ENCODE measurements at regions of chr9 and their contacts with region 1.

Region 1: DNA sequence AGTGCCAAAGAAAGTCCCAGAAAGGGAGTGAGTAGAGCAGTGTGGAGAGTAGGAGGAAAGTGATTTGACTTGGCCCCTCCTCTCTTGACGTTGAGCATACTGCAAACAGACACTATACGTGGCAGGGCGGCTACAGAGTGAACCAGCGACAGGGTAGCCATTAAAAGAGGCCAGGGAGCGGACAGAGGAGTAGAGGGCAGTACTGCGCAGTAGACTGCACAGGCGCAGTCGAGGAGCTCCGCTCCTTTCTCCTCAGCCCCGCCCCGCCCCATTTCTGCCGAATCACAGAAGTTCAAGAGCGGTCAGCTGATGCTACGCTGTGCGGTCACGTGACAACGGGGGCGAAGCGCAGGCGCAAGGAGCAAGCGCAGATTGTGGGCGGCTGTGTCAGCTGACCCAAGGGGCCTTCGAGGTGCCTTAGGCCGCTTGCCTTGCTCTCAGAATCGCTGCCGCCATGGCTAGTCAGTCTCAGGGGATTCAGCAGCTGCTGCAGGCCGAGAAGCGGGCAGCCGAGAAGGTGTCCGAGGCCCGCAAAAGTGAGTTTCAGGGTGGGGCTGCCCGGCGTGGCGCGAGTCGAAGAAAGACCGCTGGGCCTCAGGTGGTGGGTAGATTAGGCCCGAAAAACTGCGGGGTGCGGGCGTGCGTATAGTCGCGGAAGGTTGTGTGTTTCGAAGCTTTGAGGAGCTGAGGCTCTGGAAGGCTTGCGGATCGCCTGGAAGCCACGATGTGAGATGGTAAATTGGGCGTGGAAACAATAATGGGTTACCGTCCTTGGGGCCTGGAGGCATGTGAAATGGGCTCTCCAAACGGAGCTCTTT is at the start of gene ATP6V1G1:
- DNase-seq: peak; percentile 93 to 99 (median 97)
- ATAC-seq: peak; percentile 97
- H3K4me3 ChIP-seq: peak within 1 kb of the TSS; percentile 94
- H3K4me3 Mint-ChIP-seq: peak within 1 kb of the TSS; percentile 95 to 99 (median 98)
- H3K27ac ChIP-seq: peak within 1 kb of the TSS; percentile 99
- H3K27ac Mint-ChIP-seq: peak within 1 kb of the TSS; percentile 91 to 100 (median 99)
- H3K4me1 ChIP-seq: peaks cover 33 to 35% of the 10 kb centered on the region in 2 donors
- H3K4me1 Mint-ChIP-seq: peaks cover 43 to 53% (median 49%) of the 10 kb centered on the region in 7 donors
- H3K27me3 ChIP-seq: no peaks in the 10 kb centered on the region
- H3K27me3 Mint-ChIP-seq: peaks cover 0 to 6% (median 0%) of the 10 kb centered on the region in 5 donors
- total RNA-seq, gene ATP6V1G1: 86.2 to 136 (median 130) TPM

Region 2: DNA sequence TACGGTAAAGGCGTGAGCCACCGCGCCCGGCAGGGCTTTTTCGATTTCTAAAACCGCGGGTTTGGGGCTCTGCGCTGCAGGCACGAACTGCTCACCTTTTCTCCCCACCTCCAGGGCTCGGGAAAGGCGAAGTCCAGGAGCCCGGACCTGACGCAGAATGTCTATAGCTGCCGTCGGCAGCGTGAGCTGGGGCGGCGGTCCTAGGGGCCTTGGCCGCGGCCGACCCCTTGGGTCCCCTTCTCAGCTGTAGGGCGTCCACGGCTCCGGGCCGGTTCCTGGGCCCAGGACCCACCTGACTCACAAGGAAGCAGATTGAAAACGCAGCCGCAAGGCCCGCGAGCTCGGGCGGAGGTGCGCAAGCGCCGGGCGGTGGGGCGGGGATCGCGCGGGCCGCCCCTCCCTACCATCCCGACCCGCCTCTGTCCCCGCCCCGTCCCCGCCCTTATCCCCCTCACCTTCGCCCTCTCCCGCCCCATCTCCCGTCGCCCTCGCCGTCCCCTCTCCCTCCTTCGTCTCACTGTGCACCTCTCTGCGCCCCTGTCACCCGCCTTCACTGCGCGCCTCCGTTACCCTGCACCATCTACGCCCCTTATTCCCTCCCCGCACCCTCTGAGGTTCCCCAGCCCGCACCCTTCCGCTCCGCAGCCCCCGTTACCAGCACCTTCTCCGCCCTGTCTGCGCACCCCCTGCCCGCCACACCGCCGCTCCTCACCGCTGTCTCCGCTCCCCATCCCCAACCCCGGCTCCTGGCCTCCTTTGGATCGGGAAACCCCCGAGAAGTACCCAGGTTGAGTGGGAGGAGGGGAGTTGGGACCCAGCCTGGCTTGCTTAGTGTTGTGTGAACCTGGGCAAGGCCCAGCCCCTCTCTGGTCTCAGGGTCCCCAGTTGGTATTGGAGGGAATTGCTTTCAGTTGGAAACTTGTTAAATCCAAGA is 1210.7 kb before region 1 on chr9 and contains the start of gene HDHD3:
- CTCF ChIA-PET with region 1: no interaction called
- POLR2A ChIA-PET with region 1: no interaction called
- intact Hi-C with region 1: loop called in 1 of 2 experiments (anchors 5 kb)
- DNase-seq: peak; percentile 70 to 84 (median 81)
- ATAC-seq: peak; percentile 96
- H3K4me3 ChIP-seq: peak within 1 kb of the TSS; percentile 81
- H3K4me3 Mint-ChIP-seq: peak within 1 kb of the TSS; percentile 82 to 98 (median 90)
- H3K27ac ChIP-seq: peak within 1 kb of the TSS; percentile 94
- H3K27ac Mint-ChIP-seq: peak within 1 kb of the TSS; percentile 68 to 97 (median 85)
- H3K4me1 ChIP-seq: peaks cover 0 to 7% of the 10 kb centered on the region in 2 donors
- H3K4me1 Mint-ChIP-seq: peaks cover 14 to 17% (median 16%) of the 10 kb centered on the region in 7 donors
- H3K27me3 ChIP-seq: no peaks in the 10 kb centered on the region
- H3K27me3 Mint-ChIP-seq: peaks cover 0 to 3% (median 0%) of the 10 kb centered on the region in 5 donors
- total RNA-seq, gene HDHD3: 11.3 to 32.2 (median 20.5) TPM

Region 3: DNA sequence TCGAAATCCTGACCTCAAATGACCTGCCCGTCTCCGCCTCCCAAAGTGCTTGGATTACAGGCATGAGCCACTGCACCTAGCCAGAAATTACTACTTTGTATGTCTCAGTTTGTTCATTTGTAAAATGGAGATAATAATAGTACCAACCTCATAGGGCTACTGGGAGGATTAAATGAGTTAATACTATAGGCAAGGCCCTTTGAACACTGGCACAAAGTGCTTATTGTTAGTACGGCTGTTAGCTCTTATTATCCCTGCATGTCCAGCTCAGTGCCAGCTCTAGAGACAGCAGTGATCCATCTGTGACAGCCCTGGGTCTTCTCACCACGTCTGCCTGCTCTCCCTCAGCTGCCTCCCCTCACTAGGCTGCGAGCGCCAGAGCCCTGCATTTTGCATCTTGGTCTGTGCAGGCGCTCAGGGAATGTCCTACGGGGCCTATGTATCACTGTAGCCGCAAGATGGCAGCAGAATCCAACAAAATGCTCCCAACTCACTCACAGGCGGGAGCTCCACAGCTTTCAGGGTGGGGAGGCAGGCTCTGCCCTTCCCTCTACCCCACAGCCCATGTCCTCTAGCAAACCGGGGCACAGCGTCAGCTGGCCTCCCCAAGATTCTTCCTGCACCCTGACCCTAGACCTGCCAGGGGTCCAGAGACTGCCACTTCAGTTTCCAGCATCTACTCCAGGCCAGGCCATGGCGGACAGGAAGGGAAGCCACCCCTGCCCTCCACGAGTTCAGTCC is 182.1 kb before region 1 on chr9:
- CTCF ChIA-PET with region 1: interaction called, 10 read pairs
- POLR2A ChIA-PET with region 1: interaction called, 6 read pairs
- intact Hi-C with region 1: no loop called
- DNase-seq: peak; percentile 56 to 84 (median 80)
- ATAC-seq: peak; percentile 97
- H3K4me3 ChIP-seq: no peak overlapping the region
- H3K4me3 Mint-ChIP-seq: no peak overlapping the region
- H3K27ac ChIP-seq: no peak overlapping the region
- H3K27ac Mint-ChIP-seq: peak overlapping the region in 6 of 9 donors; percentile 16 to 91 (median 60)
- H3K4me1 ChIP-seq: peaks cover 4 to 11% of the 10 kb centered on the region in 2 donors
- H3K4me1 Mint-ChIP-seq: peaks cover 6 to 10% (median 6%) of the 10 kb centered on the region in 7 donors
- H3K27me3 ChIP-seq: no peaks in the 10 kb centered on the region
- H3K27me3 Mint-ChIP-seq: no peaks in the 10 kb centered on the region

Region 4: GRCh38 chr9:114505187-114506081 is 82.2 kb before region 1 on chr9 and contains the start of gene WHRN:
- CTCF ChIA-PET with region 1: interaction called, 3 read pairs
- POLR2A ChIA-PET with region 1: interaction called, 5 read pairs
- intact Hi-C with region 1: loop called (anchors 1 kb)
- DNase-seq: peak; percentile 80 to 94 (median 89)
- ATAC-seq: peak; percentile 95
- H3K4me3 ChIP-seq: peak within 1 kb of the TSS; percentile 59
- H3K4me3 Mint-ChIP-seq: peak within 1 kb of the TSS; percentile 83 to 90 (median 88)
- H3K27ac ChIP-seq: peak within 1 kb of the TSS; percentile 57
- H3K27ac Mint-ChIP-seq: peak within 1 kb of the TSS; percentile 55 to 94 (median 87)
- H3K4me1 ChIP-seq: peaks cover 14 to 29% of the 10 kb centered on the region in 2 donors
- H3K4me1 Mint-ChIP-seq: peaks cover 5 to 26% (median 22%) of the 10 kb centered on the region in 7 donors
- H3K27me3 ChIP-seq: no peaks in the 10 kb centered on the region
- H3K27me3 Mint-ChIP-seq: peaks cover 0 to 86% (median 33%) of the 10 kb centered on the region in 5 donors
- total RNA-seq, gene WHRN: 1.1 to 24.0 (median 3.0) TPM

Region 5: GRCh38 chr9:114616653-114617520 is 29.3 kb after region 1 on chr9:
- CTCF ChIA-PET with region 1: interaction called, 13 read pairs
- POLR2A ChIA-PET with region 1: interaction called, 329 read pairs
- intact Hi-C with region 1: loop called in 1 of 2 experiments (anchors 1 kb)
- DNase-seq: peak in 1 of 9 donors; percentile 32
- ATAC-seq: peak; percentile 74
- H3K4me3 ChIP-seq: no peak overlapping the region
- H3K4me3 Mint-ChIP-seq: peak overlapping the region; percentile 25 to 78 (median 64)
- H3K27ac ChIP-seq: peak overlapping the region; percentile 58
- H3K27ac Mint-ChIP-seq: peak overlapping the region; percentile 83 to 95 (median 94)
- H3K4me1 ChIP-seq: peaks cover 13 to 27% of the 10 kb centered on the region in 2 donors
- H3K4me1 Mint-ChIP-seq: peaks cover 38 to 72% (median 64%) of the 10 kb centered on the region in 7 donors
- H3K27me3 ChIP-seq: no peaks in the 10 kb centered on the region
- H3K27me3 Mint-ChIP-seq: no peaks in the 10 kb centered on the region

Region 6: GRCh38 chr9:114906908-114907571 is 319.4 kb after region 1 on chr9:
- CTCF ChIA-PET with region 1: no interaction called
- POLR2A ChIA-PET with region 1: no interaction called
- intact Hi-C with region 1: loop called in 1 of 2 experiments (anchors 10 kb)
- DNase-seq: peak in 2 of 9 donors; percentile 31 to 41
- ATAC-seq: peak; percentile 39
- H3K4me3 ChIP-seq: no peak overlapping the region
- H3K4me3 Mint-ChIP-seq: peak overlapping the region in 5 of 10 donors; percentile 6 to 79 (median 74)
- H3K27ac ChIP-seq: no peak overlapping the region
- H3K27ac Mint-ChIP-seq: peak overlapping the region in 8 of 9 donors; percentile 20 to 96 (median 53)
- H3K4me1 ChIP-seq: peaks cover 60 to 78% of the 10 kb centered on the region in 2 donors
- H3K4me1 Mint-ChIP-seq: peaks cover 50 to 79% (median 58%) of the 10 kb centered on the region in 7 donors
- H3K27me3 ChIP-seq: no peaks in the 10 kb centered on the region
- H3K27me3 Mint-ChIP-seq: no peaks in the 10 kb centered on the region

Measured in naive thymus-derived CD4-positive, alpha-beta T cell (primary cell).